Naive thymus-derived CD8-positive, alpha-beta T cell (primary cell): ENCODE measurements at regions of chr12 and their contacts with region 1.

Region 1: DNA sequence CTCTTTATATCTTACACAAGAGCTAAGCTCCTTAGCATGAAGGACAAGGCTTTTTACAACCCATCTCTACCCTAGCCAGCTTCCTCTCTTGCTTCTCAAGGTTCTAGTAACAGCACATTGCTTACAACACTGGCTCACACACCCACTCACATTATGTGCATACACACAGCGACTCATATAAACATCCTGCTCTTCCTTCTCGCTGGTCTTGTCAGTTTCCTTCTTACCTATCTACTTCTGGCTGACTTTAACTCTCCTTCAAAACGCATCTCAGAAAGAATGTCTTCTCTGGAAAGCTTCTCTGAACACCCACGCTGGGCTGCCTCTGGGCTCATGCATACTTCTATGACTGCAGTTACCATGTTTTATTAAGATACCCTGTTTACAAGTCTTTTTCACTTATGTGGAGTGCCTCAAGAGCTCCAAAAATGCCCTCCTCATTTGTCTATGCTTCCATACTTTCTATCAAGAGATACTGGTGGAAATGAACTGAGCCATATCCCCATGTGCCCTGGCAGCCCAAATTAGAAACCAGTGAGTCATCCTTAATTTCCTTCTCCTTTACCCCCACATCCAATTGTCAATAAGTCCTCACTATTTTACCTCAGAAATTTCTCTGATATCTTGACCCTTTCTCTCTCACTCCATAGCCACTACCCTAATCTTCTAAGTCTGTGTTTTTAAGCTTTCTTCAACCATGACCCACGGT is 126.9 kb upstream of the KRAS start:
- DNase-seq: peak in 8 of 10 donors; percentile 17 to 74 (median 48)
- ATAC-seq: peak; percentile 90 to 94
- H3K4me3 Mint-ChIP-seq: peak overlapping the region; percentile 29 to 71 (median 56)
- H3K27ac Mint-ChIP-seq: peak overlapping the region; percentile 86 to 98 (median 93)
- H3K4me1 Mint-ChIP-seq: peaks cover 30 to 44% (median 38%) of the 10 kb centered on the region in 4 donors
- H3K27me3 Mint-ChIP-seq: no peaks in the 10 kb centered on the region

Region 2: DNA sequence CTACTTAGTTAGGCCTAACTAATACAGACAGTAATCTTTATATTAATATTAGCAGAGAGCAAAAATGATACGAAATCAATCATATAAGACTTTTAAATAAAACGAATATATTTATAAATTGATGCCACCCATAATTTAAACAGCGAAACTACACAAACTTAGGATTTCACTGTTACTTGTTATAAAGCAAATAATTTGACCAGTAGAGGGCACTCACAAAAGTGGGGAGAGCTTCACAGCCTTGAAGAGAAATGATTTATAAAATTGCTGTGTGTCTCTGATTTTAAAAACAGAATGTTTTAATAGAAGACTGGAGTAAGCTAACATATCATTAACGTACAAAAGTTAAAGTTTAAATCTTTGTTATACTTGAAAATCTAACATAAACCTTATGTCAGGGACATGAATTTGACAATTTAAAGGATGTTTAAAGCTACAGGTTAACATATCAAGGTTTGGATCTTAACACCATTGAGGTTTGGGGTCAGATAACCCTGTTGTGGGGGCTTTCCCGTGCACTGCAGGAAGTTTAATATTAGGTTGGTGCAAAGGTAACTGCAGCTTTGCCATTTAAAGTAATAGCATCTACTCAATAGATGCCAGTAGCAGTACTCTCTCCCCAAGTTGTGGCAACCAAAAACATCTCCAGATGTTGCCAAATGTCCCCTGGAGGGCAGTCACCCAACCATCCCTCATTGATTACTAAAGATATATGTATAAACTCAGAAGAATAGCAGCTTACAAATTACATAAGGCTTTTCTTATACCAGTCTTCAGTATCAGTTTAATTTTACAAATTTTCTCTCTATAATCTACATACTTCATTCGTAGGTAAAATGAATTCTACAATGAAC is 136.2 kb before region 1 on chr12:
- POLR2A ChIA-PET with region 1: interaction called, 10 read pairs
- DNase-seq: peak in 9 of 10 donors; percentile 8 to 74 (median 65)
- ATAC-seq: peak; percentile 95 to 97
- H3K4me3 Mint-ChIP-seq: peak overlapping the region in 6 of 10 donors; percentile 1 to 41 (median 20)
- H3K27ac Mint-ChIP-seq: peak overlapping the region; percentile 61 to 93 (median 82)
- H3K4me1 Mint-ChIP-seq: peaks cover 20 to 45% (median 39%) of the 10 kb centered on the region in 4 donors
- H3K27me3 Mint-ChIP-seq: no peaks in the 10 kb centered on the region

Region 3: DNA sequence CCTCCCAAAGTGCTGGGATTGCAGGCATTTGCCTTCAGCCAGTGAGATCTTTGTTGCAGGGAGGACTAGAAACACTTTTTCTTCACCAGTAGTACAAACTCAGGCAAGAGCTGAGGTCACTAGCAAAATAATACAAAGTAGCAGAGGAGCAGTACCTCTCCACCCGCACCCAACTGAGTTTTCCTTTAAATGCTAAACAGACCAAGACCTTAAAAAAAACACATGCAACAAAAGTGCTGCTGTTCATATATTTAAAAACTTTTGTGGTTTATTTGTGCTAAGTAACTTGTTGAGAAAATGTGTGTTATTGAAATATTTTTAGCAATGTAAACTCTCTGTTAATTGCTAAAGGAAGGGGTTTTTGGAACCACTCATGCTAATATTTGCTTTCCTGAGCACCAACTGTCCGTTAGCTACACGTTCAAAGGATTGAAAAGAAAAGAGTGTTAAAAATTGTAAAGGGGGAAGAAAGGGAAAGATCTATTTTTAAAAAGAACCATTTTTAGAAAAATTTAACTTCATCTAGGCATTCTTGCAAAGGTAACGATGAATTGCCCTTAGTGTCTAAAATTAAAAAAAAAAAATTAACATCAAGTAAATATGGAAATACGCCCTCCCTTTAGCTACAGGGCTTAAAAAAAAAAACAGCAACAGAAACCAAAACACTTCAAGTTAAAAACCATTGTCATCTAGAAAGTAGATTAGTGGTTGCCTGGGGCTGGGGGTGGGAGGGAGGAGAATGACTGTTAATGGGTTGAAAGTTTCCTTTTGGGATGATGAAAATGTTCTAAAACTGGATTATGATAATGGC is 12.9 kb before region 1 on chr12:
- POLR2A ChIA-PET with region 1: interaction called, 16 read pairs
- DNase-seq: no peak
- ATAC-seq: peak; percentile 37 to 61
- H3K4me3 Mint-ChIP-seq: peak overlapping the region in 9 of 10 donors; percentile 3 to 78 (median 31)
- H3K27ac Mint-ChIP-seq: peak overlapping the region in 5 of 10 donors; percentile 6 to 78 (median 65)
- H3K4me1 Mint-ChIP-seq: peaks cover 5 to 14% (median 12%) of the 10 kb centered on the region in 4 donors
- H3K27me3 Mint-ChIP-seq: no peaks in the 10 kb centered on the region